ENCODE measurements at regions of chr1 and their contacts with region 1.

Region 1: DNA sequence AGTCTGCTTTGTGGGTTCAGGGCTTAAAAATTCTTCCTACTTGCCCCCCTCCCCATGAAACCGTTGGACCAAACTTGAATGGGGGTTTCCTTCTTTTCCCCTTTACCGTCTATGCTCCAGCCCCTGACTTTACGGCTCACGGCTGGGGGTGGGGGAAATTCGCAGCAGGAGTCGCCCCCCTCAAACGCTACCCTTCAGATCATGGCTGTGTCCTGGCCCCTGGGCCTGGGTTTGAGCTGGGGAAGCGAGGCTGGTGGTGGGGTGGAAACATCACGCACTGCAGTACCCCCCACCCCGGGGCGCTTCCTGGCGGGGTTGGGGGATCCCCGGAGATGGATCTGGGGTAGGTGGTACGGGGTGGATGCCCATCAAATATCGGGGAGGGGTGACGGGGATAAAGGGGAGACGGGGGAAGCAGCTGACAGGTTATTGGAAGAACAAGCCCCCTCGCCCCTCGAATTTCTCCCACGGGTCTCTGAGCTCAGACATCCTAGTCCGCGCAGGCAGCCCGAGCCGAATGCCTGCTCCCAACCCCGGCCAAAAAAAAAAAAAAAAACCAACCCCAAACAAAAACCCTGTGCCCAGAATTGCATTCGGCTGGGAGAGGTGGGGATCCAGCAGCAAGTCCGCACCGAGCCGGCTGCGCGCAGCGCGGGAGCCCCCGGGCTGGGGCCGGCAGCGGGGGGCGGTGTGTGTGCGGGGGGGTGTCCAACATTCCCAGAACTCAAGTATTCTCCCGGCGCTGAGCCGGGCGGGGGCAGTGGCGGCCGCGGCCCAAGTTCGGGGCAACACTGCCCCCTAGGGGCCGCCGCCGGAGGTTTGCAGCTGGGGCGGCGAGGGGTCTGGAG is 59.0 kb upstream of the ACOT11 start:
- DNase-seq: peak; percentile 73 to 88
- H3K4me3 ChIP-seq: peak overlapping the region; percentile 39
- H3K4me1 ChIP-seq: peaks cover 8% of the 10 kb centered on the region
- H3K27me3 ChIP-seq: no peaks in the 10 kb centered on the region

Region 2: DNA sequence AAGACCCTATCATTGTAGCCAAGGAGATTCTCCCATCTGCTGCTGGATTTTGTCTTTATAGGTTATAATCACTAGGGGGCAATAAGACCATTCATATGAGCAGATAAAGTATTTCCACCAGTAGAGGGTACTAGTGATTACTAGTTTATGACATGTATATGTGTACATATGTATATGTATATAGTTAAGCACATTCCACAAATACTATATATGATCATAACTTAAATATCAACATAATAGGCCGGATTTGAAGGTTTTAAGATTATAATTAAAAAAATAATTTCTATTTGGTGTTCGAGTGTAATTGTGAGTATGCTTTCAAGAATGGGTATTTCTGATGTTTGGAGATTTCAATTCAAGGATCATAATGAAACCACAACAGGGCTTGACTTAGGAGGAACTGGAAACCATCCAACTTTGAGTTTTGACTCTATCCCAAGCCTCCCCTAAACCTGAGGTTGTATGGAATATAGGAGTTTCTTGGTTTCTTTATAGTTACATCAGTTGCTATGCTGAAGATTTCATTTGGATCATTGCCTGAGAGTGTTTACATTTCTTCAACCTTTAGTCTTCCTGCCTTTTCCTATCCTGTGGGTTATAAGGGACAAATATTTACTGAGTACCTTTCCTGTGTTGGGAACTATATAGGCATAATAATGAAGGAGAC is 418.7 kb before region 1 on chr1:
- in situ Hi-C with region 1: loop called (anchors 10 kb)
- DNase-seq: peak in 1 of 2 experiments; percentile 75
- H3K4me3 ChIP-seq: no peak overlapping the region
- H3K4me1 ChIP-seq: no peaks in the 10 kb centered on the region
- H3K27me3 ChIP-seq: no peaks in the 10 kb centered on the region

Region 3: GRCh38 chr1:54095546-54096226 is 393.3 kb before region 1 on chr1:
- in situ Hi-C with region 1: no loop called
- DNase-seq: no peak
- H3K4me3 ChIP-seq: no peak overlapping the region
- H3K4me1 ChIP-seq: no peaks in the 10 kb centered on the region
- H3K27me3 ChIP-seq: no peaks in the 10 kb centered on the region

Region 4: GRCh38 chr1:54406339-54407153 is 82.5 kb before region 1 on chr1 and contains the start of gene SSBP3:
- in situ Hi-C with region 1: loop called (anchors 5 kb)
- DNase-seq: peak; percentile 91 to 93
- H3K4me3 ChIP-seq: peak within 1 kb of the TSS; percentile 71
- H3K4me1 ChIP-seq: peaks cover 26% of the 10 kb centered on the region
- H3K27me3 ChIP-seq: no peaks in the 10 kb centered on the region

Measured in HAP-1 (cell line).